PC-3 (cell line): ENCODE measurements at regions of chr2 and their contacts with region 1.

Region 1: DNA sequence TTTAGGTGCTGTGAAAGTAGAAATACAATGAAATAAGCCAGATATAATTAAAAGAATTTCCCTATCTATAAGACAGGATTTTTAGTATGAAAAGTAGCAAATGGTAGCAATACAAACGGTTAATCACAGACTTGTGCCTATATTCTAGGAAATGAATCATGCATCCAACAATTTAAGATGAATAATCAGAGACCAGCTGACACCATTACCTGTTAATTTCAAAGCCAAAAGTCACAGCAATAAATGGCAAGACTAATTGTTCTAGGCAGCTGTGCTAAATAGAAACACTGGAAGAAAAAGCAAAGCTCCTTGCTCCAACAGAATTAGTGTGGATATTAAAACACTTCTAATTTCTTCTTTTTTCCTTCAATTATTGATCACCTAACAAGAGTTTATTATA is 35.1 kb upstream of the MPP4 start:
- DNase-seq: no peak
- ATAC-seq: 0 out of 2 replicates have a peak, but pooled peaks have one; percentile 40
- H3K4me3 ChIP-seq: no peak overlapping the region
- H3K27ac ChIP-seq: no peak overlapping the region
- H3K4me1 ChIP-seq: no peaks in the 10 kb centered on the region
- H3K27me3 ChIP-seq: no peaks in the 10 kb centered on the region
- CTCF ChIP-seq: no peak

Region 2: GRCh38 chr2:201780674-201781581 is 47.4 kb after region 1 on chr2 and contains the start of gene ALS2:
- CTCF ChIA-PET with region 1: no interaction called
- POLR2A ChIA-PET with region 1: interaction called, 33 read pairs
- intact Hi-C with region 1: no loop called
- DNase-seq: peak; percentile 97
- ATAC-seq: peak; percentile 87
- H3K4me3 ChIP-seq: peak within 1 kb of the TSS; percentile 97
- H3K27ac ChIP-seq: peak within 1 kb of the TSS; percentile 59
- H3K4me1 ChIP-seq: peaks cover 44% of the 10 kb centered on the region
- H3K27me3 ChIP-seq: no peaks in the 10 kb centered on the region
- CTCF ChIP-seq: no peak
- total RNA-seq, gene ALS2: 20.4 and 23.8 TPM in 2 replicates

Region 3: GRCh38 chr2:201795607-201796477 is 62.3 kb after region 1 on chr2:
- CTCF ChIA-PET with region 1: no interaction called
- POLR2A ChIA-PET with region 1: no interaction called
- intact Hi-C with region 1: no loop called
- DNase-seq: peak; percentile 70
- ATAC-seq: peak; percentile 20; the same call in 1 of the 2 replicates
- H3K4me3 ChIP-seq: no peak overlapping the region
- H3K27ac ChIP-seq: peak overlapping the region; percentile 96
- H3K4me1 ChIP-seq: peaks cover 28% of the 10 kb centered on the region
- H3K27me3 ChIP-seq: no peaks in the 10 kb centered on the region
- CTCF ChIP-seq: peak; percentile 85

Region 4: DNA sequence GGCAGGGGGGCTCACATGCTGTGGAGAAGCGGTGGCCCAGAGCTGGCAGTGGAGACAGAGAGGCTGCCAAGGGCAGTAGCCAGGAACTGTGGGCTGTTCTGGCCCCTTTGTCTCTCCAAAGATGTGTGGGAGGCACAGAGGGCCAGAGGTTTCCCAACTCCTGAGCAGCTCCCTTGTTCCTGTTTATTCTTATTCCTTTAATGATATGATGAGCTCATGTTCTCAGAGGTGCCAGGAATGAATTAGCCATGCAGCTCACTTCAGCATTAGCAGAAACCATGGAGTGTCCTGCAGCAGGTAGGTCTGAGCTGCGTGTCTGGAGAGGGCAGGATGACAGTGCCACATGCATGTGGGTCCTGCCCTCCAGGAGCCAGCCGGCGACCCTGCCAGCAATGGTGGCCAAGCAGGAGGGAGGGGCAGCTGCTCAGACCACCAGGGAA is 222.2 kb after region 1 on chr2:
- CTCF ChIA-PET with region 1: no interaction called
- POLR2A ChIA-PET with region 1: no interaction called
- intact Hi-C with region 1: no loop called
- DNase-seq: no peak
- ATAC-seq: peak; percentile 37; the same call in 1 of the 2 replicates
- H3K4me3 ChIP-seq: no peak overlapping the region
- H3K27ac ChIP-seq: no peak overlapping the region
- H3K4me1 ChIP-seq: peaks cover 7% of the 10 kb centered on the region
- H3K27me3 ChIP-seq: no peaks in the 10 kb centered on the region
- CTCF ChIP-seq: no peak